Right ventricle myocardium superior (tissue), 1 donor: ENCODE measurements at regions of chr16 and their contacts with region 1.

Region 1: DNA sequence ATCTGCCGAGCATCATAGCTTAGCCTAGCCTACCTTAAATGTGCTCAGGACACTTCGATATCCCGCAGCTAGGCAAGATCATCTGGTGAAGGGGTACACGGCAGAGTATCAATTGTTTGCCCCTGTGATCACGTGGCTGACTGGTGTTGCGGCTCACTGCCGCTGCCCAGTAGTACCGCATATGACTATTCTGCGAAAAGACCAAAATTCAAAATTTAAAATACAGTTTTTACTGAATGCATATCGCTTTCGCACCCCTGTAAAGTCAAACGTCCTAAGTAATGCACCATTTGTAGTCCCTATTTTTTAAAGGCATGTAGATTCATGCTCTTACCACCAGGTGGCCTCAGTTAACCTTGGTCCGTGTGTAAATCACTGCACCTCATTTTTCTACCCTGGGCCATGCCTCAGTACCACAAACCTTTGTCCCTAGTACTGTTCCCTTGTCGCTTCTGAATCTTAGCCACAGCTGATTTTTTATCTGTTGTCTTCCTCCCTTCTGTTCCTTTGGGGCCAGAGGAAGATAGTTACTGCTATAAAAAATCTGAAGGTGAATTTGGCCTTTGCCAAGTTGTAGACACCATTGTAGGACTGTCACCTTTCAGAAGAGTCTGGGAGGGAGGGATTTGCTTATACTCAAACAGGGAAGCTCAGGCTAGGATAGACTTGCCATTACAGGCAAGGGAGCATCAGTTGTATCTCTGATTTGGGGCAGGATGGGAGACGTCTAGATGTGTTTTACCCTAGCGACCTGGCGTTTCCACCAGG is 34.4 kb downstream of the WWP2 start:
- DNase-seq: no peak
- ATAC-seq: peak; percentile 89

Region 2: DNA sequence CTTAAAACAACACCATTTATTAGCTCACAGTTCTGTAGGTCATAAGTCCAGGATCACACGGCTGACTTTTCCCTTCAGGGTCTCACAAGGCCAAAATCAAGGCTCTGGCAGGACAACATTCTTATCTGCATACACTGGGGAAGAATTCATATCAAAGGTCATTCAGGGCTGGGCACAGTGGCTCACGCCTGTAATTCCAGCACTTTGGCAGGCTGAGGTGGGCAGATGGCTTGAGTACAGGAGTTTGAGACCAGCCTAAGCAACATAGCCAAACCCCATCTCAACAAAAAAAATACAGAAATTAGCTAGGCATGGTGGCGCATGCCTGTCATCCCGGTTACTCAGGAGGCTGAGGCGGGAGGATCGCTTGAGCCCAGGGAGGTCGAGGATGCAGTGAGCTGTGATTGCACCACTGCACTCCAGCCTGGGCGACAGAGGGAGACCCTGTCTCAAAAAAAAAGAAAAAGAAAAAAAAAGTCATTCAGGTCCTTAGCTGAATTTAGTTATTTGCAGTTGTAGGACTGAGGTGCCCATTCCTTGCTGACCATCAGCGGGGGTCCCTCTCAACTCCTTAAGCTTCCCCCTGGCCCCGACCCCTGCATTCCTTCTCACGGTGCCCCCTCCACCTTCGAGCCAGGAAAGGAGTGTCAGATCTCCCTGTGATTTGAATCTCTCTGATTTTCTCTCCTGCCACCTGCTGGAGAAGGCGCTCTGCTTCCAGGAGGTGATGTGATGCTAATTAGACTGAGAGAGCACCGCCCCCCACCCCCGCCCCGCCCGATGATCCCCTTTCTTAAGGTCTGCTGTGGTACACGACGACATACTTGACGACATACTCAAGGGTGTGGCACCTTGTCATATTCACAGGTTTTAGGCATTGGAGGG is 62.8 kb after region 1 on chr16:
- intact Hi-C with region 1: loop called (anchors 10 kb)
- DNase-seq: peak; percentile 65
- ATAC-seq: peak; percentile 81

Region 3: GRCh38 chr16:69894676-69895075 is 98.1 kb after region 1 on chr16:
- intact Hi-C with region 1: no loop called
- DNase-seq: no peak
- ATAC-seq: no peak

Region 4: GRCh38 chr16:69930117-69930776 is 133.7 kb after region 1 on chr16:
- intact Hi-C with region 1: loop called (anchors 1 kb)
- DNase-seq: peak; percentile 65
- ATAC-seq: peak; percentile 84